ENCODE measurements at regions of chr5 and their contacts with region 1.

Region 1: DNA sequence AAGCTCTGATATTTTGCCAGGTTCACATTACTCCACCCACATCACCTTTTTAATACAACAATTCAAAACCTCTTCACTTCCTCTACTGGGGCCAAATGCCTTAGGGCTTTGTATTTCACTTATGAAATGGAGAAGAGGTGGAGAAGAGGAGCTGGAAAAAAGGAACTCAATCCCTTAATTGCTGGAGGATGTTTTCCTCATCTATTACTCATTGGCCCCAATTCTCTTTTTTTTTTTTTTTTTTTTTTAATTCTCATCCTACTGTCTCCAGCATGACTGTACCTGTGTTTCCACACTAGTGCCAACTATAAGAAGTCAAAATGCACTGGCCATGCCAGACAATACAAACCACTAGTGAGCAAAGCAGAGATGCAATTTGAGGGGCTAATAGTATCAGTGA is 20.9 kb downstream of the FAM13B start:
- DNase-seq: no peak
- H3K4me3 ChIP-seq: no peak overlapping the region
- H3K27ac ChIP-seq: no peak overlapping the region
- H3K27me3 ChIP-seq: no peaks in the 10 kb centered on the region
- CTCF ChIP-seq: no peak

Region 2: DNA sequence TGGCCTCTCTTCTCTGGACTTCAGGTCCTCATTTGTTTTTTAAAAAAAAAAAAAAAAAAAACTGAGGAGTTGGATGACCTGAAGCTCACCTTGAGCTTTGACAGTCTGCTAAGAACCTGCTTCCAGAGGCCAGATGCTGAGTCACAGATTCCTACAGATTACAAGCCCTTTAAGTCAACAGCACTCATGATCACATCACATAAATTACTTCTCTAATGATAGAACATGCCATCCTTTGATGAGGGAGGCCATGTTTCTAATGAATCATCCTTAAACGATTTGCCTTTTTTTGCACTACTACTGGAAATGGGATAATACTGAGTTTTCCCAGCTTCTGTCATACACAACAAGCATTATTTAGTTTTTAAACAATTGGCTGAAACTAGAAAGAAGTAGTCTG is 178.5 kb before region 1 on chr5:
- CTCF ChIA-PET with region 1: no interaction called
- POLR2A ChIA-PET with region 1: no interaction called
- DNase-seq: no peak
- H3K4me3 ChIP-seq: no peak overlapping the region
- H3K27ac ChIP-seq: no peak overlapping the region
- H3K27me3 ChIP-seq: no peaks in the 10 kb centered on the region
- CTCF ChIP-seq: no peak

Region 3: DNA sequence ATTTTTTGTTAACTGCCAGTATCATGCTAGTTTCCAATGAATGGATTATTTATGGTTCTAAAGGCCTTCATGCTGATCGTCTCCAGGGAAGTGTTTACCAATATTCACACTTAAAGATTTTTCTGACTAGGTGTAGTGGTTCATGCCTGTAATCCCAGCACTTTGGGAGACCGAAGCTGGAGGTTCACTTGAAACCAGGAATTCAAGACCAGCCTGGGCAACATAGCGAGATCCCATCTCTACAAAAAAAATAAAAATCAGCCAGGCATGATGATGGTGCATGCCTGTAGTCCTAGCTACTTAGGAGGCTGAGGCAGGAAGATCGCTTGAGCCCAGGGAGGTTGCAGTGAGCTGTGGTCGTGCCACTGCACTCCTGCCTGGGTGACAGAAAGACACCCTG is 22.6 kb before region 1 on chr5:
- CTCF ChIA-PET with region 1: interaction called, 13 read pairs
- POLR2A ChIA-PET with region 1: no interaction called
- DNase-seq: no peak
- H3K4me3 ChIP-seq: no peak overlapping the region
- H3K27ac ChIP-seq: no peak overlapping the region
- H3K27me3 ChIP-seq: no peaks in the 10 kb centered on the region
- CTCF ChIP-seq: no peak

Region 4: GRCh38 chr5:138188626-138189025 is 176.6 kb after region 1 on chr5:
- CTCF ChIA-PET with region 1: no interaction called
- POLR2A ChIA-PET with region 1: no interaction called
- DNase-seq: no peak
- H3K4me3 ChIP-seq: no peak overlapping the region
- H3K27ac ChIP-seq: no peak overlapping the region
- H3K27me3 ChIP-seq: no peaks in the 10 kb centered on the region
- CTCF ChIP-seq: no peak